CD4-positive, alpha-beta memory T cell (primary cell): ENCODE measurements at regions of chr1 and their contacts with region 1.

Region 1: DNA sequence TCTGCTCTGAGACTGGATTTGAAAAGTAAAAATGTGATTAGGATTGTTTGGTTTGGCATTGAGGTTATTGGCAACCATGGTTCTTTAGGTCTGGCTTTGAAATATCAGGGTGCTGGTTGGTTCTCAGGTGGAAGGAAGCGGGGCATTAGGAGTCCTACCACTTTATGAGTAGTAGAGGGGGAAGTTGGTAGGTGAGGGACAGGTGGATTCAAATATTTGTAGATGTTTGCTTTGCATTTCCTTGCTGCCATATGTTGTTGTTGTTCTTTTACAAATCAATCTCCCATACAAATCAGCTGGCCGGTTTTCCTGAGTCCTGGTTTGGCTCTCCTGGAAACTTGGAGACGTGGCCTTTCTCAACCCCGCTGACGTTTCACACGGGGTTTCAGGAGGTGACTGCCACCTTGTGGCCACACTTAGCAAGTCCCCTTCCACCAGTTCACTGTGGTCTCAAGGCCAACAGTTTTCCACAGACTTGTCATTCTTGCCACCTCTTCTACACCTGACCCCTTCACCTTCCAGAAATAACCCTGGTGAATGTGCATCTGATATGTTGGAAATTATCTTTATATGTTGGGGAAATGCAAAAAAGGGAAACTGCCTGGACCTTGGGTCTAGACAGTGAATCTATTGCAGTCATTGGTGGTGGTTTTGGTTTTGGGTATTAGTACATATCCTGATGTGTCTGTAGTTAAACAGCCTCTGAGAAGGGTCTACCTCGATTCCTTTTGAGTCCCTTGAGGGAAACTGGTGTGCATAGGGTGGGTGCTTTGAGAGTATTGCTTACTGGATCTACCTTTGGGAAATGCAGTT is 127.0 kb upstream of the KIAA0040 start:
- DNase-seq: peak; percentile 54 to 66 (median 63)
- H3K4me3 ChIP-seq: no peak overlapping the region
- H3K4me3 Mint-ChIP-seq: peak overlapping the region in 1 of 8 donors; percentile 45
- H3K27ac ChIP-seq: no peak overlapping the region
- H3K27ac Mint-ChIP-seq: peak overlapping the region in 1 of 7 donors; percentile 61
- H3K4me1 ChIP-seq: peaks cover 5% of the 10 kb centered on the region
- H3K4me1 Mint-ChIP-seq: peaks cover 5 to 18% (median 9%) of the 10 kb centered on the region in 4 donors
- H3K27me3 ChIP-seq: peaks cover 6% of the 10 kb centered on the region
- H3K27me3 Mint-ChIP-seq: peaks cover 5 to 7% of the 10 kb centered on the region in 2 donors

Region 2: GRCh38 chr1:175146529-175147213 is 173.0 kb before region 1 on chr1:
- CTCF ChIA-PET with region 1: interaction called, 490 read pairs
- POLR2A ChIA-PET with region 1: interaction called, 7 read pairs
- intact Hi-C with region 1: no loop called
- DNase-seq: peak; percentile 47 to 58 (median 54)
- H3K4me3 ChIP-seq: no peak overlapping the region
- H3K4me3 Mint-ChIP-seq: peak overlapping the region in 1 of 8 donors; percentile 22
- H3K27ac ChIP-seq: no peak overlapping the region
- H3K27ac Mint-ChIP-seq: no peak overlapping the region
- H3K4me1 ChIP-seq: peaks cover 2% of the 10 kb centered on the region
- H3K4me1 Mint-ChIP-seq: peaks cover 0 to 13% (median 7%) of the 10 kb centered on the region in 4 donors
- H3K27me3 ChIP-seq: no peaks in the 10 kb centered on the region
- H3K27me3 Mint-ChIP-seq: peaks cover 17% of the 10 kb centered on the region in 2 donors

Region 3: GRCh38 chr1:175169305-175170018 is 150.2 kb before region 1 on chr1:
- CTCF ChIA-PET with region 1: interaction called, 22 read pairs
- POLR2A ChIA-PET with region 1: no interaction called
- intact Hi-C with region 1: no loop called
- DNase-seq: no peak
- H3K4me3 ChIP-seq: no peak overlapping the region
- H3K4me3 Mint-ChIP-seq: no peak overlapping the region
- H3K27ac ChIP-seq: no peak overlapping the region
- H3K27ac Mint-ChIP-seq: peak overlapping the region; percentile 37 to 85 (median 71)
- H3K4me1 ChIP-seq: peaks cover 30% of the 10 kb centered on the region
- H3K4me1 Mint-ChIP-seq: peaks cover 50 to 76% (median 60%) of the 10 kb centered on the region in 4 donors
- H3K27me3 ChIP-seq: no peaks in the 10 kb centered on the region
- H3K27me3 Mint-ChIP-seq: no peaks in the 10 kb centered on the region

Region 4: DNA sequence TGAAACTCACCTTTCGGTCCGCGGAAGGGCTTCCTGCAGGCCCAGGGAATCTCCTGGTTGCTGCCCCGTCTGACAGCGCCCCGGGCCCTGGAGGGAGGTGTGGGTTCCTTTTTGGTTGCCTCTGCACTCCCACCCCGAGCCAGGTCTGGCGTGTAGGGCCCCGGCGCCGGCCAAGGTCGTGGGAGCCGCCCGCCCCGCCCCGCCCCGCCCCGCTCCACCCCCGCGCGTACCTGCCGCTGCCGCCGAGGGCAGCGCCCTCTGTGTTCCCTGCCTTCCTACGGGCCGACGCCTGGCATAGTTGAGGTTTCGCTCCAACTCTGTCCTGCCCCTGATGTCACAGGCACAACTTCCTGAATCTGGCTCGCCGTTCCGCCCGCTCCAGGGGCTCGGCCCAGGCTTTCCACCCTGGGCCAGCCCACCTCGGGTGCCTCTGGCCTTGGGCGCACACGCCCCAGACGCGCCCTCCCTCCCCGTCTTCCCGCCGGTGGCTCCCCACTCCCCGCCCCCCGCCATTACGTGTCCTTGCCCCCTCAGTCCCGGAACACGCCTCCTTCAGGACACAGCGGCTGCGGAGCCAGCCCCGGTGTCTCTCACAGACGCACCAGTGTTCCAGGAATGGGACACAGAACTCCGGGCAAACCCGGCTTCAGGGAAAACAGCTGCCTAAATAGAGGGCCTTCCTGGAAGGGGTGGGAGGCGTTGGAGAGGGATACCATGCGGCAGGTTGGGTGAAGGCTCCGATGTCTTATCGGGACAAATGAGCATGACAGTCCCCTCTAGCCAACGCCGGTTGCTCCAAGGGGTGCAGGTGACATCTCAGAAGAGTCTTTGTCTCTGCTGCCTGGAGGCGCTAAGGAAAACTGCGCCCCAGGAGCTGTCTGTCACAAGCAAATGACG is 126.7 kb before region 1 on chr1 and contains the start of gene KIAA0040:
- CTCF ChIA-PET with region 1: interaction called, 58 read pairs
- POLR2A ChIA-PET with region 1: interaction called, 3 read pairs
- intact Hi-C with region 1: no loop called
- DNase-seq: peak; percentile 49 to 66 (median 51)
- H3K4me3 ChIP-seq: peak within 1 kb of the TSS; percentile 85 to 91
- H3K4me3 Mint-ChIP-seq: peak within 1 kb of the TSS; percentile 92 to 99 (median 98)
- H3K27ac ChIP-seq: peak within 1 kb of the TSS; percentile 75
- H3K27ac Mint-ChIP-seq: peak within 1 kb of the TSS; percentile 92 to 98 (median 96)
- H3K4me1 ChIP-seq: peaks cover 51% of the 10 kb centered on the region
- H3K4me1 Mint-ChIP-seq: peaks cover 39 to 76% (median 51%) of the 10 kb centered on the region in 4 donors
- H3K27me3 ChIP-seq: no peaks in the 10 kb centered on the region
- H3K27me3 Mint-ChIP-seq: no peaks in the 10 kb centered on the region
- total RNA-seq, gene KIAA0040: 28.7 to 33.6 TPM

Region 5: DNA sequence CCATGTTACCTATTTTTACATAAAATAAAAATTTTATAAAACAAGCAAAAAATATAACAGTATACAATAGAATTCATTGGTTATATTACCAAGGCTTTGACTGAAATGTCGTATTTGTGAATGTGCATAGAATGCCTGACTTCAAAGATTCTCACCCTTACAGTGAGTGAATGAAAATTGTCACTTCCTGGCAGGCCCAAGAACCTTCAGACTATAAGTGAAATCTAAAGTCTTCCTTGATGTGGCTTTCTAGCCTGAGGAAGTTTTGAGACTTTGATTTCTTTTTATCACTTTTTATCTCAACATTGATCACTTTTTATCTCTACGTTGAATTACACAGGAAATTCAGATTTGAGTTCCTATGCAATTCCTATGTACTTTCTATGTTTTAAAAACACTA is 22.3 kb before region 1 on chr1:
- CTCF ChIA-PET with region 1: interaction called, 9 read pairs
- POLR2A ChIA-PET with region 1: no interaction called
- intact Hi-C with region 1: loop called (anchors 1 kb)
- DNase-seq: peak in 4 of 5 donors; percentile 41 to 57 (median 50)
- H3K4me3 ChIP-seq: no peak overlapping the region
- H3K4me3 Mint-ChIP-seq: peak overlapping the region in 2 of 8 donors; percentile 11 to 52
- H3K27ac ChIP-seq: no peak overlapping the region
- H3K27ac Mint-ChIP-seq: no peak overlapping the region
- H3K4me1 ChIP-seq: peaks cover 39% of the 10 kb centered on the region
- H3K4me1 Mint-ChIP-seq: peaks cover 23 to 46% (median 33%) of the 10 kb centered on the region in 4 donors
- H3K27me3 ChIP-seq: no peaks in the 10 kb centered on the region
- H3K27me3 Mint-ChIP-seq: peaks cover 4 to 8% of the 10 kb centered on the region in 2 donors

Region 6: DNA sequence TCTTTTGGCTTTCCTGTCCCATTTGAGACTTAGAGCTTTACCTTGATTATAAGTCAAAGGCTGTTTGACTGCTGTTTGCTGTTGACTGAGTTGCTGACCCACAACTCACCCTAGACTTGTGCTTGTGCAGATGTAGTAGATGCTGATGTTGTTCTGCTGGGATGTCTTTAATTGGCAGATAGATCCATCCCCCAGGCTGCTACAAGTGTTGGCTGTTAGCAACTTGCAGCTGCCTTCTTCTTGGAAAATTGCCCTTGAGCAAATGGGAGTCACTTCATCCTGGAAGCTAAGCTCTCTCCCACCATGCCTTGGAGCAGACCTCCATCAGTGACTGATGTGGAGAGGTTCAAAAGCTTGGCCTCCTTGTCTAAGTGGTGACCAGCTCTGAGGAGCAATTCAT is 12.3 kb after region 1 on chr1:
- CTCF ChIA-PET with region 1: interaction called, 28 read pairs
- POLR2A ChIA-PET with region 1: no interaction called
- intact Hi-C with region 1: no loop called
- DNase-seq: no peak
- H3K4me3 ChIP-seq: no peak overlapping the region
- H3K4me3 Mint-ChIP-seq: no peak overlapping the region
- H3K27ac ChIP-seq: no peak overlapping the region
- H3K27ac Mint-ChIP-seq: no peak overlapping the region
- H3K4me1 ChIP-seq: no peaks in the 10 kb centered on the region
- H3K4me1 Mint-ChIP-seq: no peaks in the 10 kb centered on the region
- H3K27me3 ChIP-seq: no peaks in the 10 kb centered on the region
- H3K27me3 Mint-ChIP-seq: peaks cover 6 to 11% of the 10 kb centered on the region in 2 donors

Region 7: GRCh38 chr1:176073524-176074157 is 754.0 kb after region 1 on chr1:
- CTCF ChIA-PET with region 1: no interaction called
- POLR2A ChIA-PET with region 1: no interaction called
- intact Hi-C with region 1: loop called (anchors 5 kb)
- DNase-seq: peak in 4 of 5 donors; percentile 26 to 34 (median 31)
- H3K4me3 ChIP-seq: no peak overlapping the region
- H3K4me3 Mint-ChIP-seq: no peak overlapping the region
- H3K27ac ChIP-seq: no peak overlapping the region
- H3K27ac Mint-ChIP-seq: peak overlapping the region in 2 of 7 donors; percentile 1 to 22
- H3K4me1 ChIP-seq: no peaks in the 10 kb centered on the region
- H3K4me1 Mint-ChIP-seq: peaks cover 0 to 15% (median 12%) of the 10 kb centered on the region in 4 donors
- H3K27me3 ChIP-seq: no peaks in the 10 kb centered on the region
- H3K27me3 Mint-ChIP-seq: no peaks in the 10 kb centered on the region